Endothelial cell of umbilical vein (primary cell): ENCODE measurements at regions of chr2 and their contacts with region 1.

Region 1: DNA sequence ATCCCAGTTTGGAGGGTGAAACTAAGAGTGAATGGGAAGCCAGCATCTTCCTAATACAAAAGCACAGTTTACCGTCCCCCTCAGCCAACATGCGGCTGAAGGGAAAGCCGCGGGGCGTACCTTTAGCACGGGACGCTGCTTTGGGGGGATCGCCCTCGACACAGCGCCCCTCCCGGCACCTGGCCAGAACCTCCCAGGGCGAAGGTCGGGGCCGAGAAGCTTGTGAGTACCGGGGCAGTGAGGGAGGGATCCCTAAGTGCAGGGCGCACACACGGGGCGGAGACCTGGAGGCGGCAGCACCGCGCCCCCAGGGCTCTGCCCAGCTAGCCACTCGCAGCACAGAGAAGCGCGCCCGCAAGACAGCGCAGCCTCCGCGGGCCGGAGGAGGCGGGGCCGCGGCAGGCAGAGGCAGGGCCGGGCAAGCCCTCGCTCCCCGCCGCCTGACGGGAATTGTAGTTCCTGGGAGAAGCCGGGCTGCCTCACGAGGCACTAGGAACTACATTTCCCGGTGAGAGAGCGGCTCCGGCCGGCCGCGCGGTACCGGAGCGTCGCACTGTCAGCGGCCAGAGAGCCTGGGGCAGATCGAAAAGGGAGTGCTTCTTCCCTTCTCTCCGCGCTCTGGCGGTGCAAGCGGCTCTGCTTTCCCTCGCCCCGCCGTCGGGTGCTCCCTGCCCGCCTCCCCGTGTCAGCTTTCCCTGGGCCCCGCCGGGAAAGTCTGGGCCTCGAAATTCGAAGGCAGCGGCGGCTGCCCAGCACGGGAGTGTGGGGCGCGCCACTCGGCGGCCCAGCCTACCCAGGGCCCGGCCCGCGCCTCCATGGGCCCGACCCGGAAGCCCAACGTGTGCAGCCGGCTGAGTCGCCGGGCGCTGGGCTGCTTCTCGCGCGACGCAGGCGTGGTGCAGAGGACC is at the starts of genes DCAF17 and METTL8:
- DNase-seq: peak; percentile 97
- H3K4me3 ChIP-seq: peak within 1 kb of the TSS; percentile 76 to 87 (median 85)
- H3K27ac ChIP-seq: peak within 1 kb of the TSS; percentile 95
- H3K4me1 ChIP-seq: peaks cover 14% of the 10 kb centered on the region
- H3K27me3 ChIP-seq: no peaks in the 10 kb centered on the region
- CTCF ChIP-seq: peak; percentile 7 to 35
- POLR2A ChIP-seq: peak; percentile 84
- total RNA-seq, gene DCAF17: 14.9 and 15.0 TPM in 2 replicates
- total RNA-seq, gene METTL8: 20.2 and 25.0 TPM in 2 replicates

Region 2: GRCh38 chr2:170928824-170929685 is 505.0 kb before region 1 on chr2 and contains the start of gene GORASP2:
- CTCF ChIA-PET with region 1: interaction called, 5 read pairs
- POLR2A ChIA-PET with region 1: no interaction called
- dilution Hi-C with region 1: no loop called
- intact Hi-C with region 1: loop called (anchors 1 kb)
- DNase-seq: peak; percentile 99
- H3K4me3 ChIP-seq: peak within 1 kb of the TSS; percentile 80 to 98 (median 91)
- H3K27ac ChIP-seq: peak within 1 kb of the TSS; percentile 70
- H3K4me1 ChIP-seq: peaks cover 16% of the 10 kb centered on the region
- H3K27me3 ChIP-seq: no peaks in the 10 kb centered on the region
- CTCF ChIP-seq: peak; percentile 88 to 99
- POLR2A ChIP-seq: peak; percentile 92
- total RNA-seq, gene GORASP2: 93.7 and 104 TPM in 2 replicates

Region 3: GRCh38 chr2:170973492-170974303 is 460.3 kb before region 1 on chr2:
- CTCF ChIA-PET with region 1: interaction called, 5 read pairs
- POLR2A ChIA-PET with region 1: no interaction called
- dilution Hi-C with region 1: no loop called
- intact Hi-C with region 1: loop called (anchors 5 kb)
- DNase-seq: peak; percentile 85
- H3K4me3 ChIP-seq: peak overlapping the region; percentile 54 to 74 (median 69)
- H3K27ac ChIP-seq: peak overlapping the region; percentile 79
- H3K4me1 ChIP-seq: peaks cover 8% of the 10 kb centered on the region
- H3K27me3 ChIP-seq: no peaks in the 10 kb centered on the region
- CTCF ChIP-seq: peak; percentile 83 to 98
- POLR2A ChIP-seq: peak; percentile 67

Region 4: GRCh38 chr2:172743143-172743542 is 1309.1 kb after region 1 on chr2:
- CTCF ChIA-PET with region 1: no interaction called
- POLR2A ChIA-PET with region 1: no interaction called
- dilution Hi-C with region 1: no loop called
- intact Hi-C with region 1: no loop called
- DNase-seq: peak; percentile 89
- H3K4me3 ChIP-seq: no peak overlapping the region
- H3K27ac ChIP-seq: peak overlapping the region; percentile 35
- H3K4me1 ChIP-seq: peaks cover 11% of the 10 kb centered on the region
- H3K27me3 ChIP-seq: peaks cover 0 to 6% of the 10 kb centered on the region in 2 experiments
- CTCF ChIP-seq: no peak
- POLR2A ChIP-seq: no peak